ENCODE measurements at regions of chr1 and their contacts with region 1.

Region 1: DNA sequence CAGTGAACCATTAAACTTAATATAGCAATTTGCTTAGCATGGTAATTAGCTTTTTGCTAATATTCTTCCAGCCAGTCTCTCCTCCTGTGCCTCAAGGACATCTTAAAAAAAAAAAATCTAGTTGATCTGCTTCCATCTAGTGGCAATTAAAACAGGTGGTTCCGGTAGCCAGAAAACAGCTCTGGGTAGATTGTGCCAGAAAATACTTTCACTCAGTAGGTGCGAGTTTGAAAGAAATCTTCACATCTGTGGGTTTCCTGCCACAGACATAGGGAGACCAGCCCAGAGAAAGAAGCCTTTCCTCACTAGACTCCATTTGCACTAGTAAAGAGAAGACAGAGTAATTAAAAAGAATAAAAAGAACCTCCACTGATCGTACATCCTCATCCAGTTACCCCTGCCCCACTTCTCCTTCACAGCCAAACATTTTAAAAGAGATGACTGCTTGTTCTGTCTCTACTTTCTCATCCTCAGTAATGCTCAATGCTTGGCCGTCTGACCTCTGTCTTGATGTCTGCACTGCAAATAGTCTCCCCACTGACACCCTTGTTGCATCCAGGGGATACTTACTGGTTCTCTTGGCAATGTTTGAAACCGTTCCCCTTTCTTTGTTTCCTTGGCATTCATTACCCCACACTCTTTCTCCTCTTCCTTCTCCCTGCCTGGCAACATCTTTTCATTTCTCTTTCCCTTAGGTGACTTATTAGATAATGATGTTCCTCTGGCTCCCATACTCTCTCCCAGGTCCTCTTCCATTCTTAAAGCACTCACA is 16.9 kb downstream of the SELL start:
- DNase-seq: no peak
- ATAC-seq: peak; percentile 76
- H3K4me3 Mint-ChIP-seq: peak overlapping the region; percentile 56
- H3K27ac Mint-ChIP-seq: peak overlapping the region; percentile 90
- H3K4me1 Mint-ChIP-seq: peaks cover 87% of the 10 kb centered on the region
- H3K27me3 Mint-ChIP-seq: no peaks in the 10 kb centered on the region

Region 2: DNA sequence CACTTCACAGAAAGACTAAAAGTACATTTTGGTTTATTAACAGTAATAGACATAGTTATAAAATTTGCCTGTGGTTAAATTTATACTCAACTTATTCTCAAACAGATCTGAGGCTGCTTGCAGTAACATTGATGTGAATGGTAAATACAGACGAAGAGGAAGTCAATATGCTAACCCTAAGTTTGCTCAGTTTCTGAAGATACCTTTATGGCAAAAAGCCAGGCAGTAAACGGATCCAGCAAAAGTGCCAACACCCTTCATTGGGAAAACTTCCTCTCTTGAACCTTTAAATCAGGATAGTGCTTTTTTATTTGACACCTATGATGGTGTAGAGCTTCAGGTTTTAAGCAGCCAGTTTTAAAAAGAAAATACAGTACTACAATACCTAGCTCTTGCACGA is 250.6 kb before region 1 on chr1:
- POLR2A ChIA-PET with region 1: no interaction called
- DNase-seq: no peak
- ATAC-seq: no peak
- H3K4me3 Mint-ChIP-seq: no peak overlapping the region
- H3K27ac Mint-ChIP-seq: no peak overlapping the region
- H3K4me1 Mint-ChIP-seq: no peaks in the 10 kb centered on the region
- H3K27me3 Mint-ChIP-seq: peaks cover 35% of the 10 kb centered on the region

Region 3: GRCh38 chr1:169601093-169601881 is 93.2 kb before region 1 on chr1:
- POLR2A ChIA-PET with region 1: interaction called, 29 read pairs
- DNase-seq: no peak
- ATAC-seq: no peak
- H3K4me3 Mint-ChIP-seq: no peak overlapping the region
- H3K27ac Mint-ChIP-seq: peak overlapping the region; percentile 35
- H3K4me1 Mint-ChIP-seq: peaks cover 33% of the 10 kb centered on the region
- H3K27me3 Mint-ChIP-seq: no peaks in the 10 kb centered on the region

Region 4: DNA sequence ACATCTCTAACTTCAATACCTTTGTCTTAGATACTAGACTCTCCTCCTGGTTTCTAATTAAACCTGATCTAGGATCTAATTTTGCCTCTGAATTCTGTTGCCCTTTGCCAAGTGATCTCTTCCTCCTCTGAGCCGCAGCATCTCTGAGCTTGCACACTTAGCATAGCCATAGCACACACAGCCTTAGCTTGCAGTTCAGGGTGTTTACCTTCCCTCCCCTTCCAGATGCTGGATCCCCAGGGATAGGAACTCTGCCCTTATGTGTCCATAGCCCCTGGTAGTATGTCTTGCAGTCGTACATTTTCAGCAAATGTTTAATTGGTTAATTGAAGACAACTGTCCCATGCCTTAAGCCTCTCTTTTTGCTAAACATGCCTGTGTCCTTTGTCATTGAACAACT is 13.3 kb before region 1 on chr1:
- POLR2A ChIA-PET with region 1: interaction called, 10 read pairs
- DNase-seq: no peak
- ATAC-seq: peak; percentile 20
- H3K4me3 Mint-ChIP-seq: peak overlapping the region; percentile 37
- H3K27ac Mint-ChIP-seq: peak overlapping the region; percentile 73
- H3K4me1 Mint-ChIP-seq: peaks cover 28% of the 10 kb centered on the region
- H3K27me3 Mint-ChIP-seq: no peaks in the 10 kb centered on the region

Region 5: GRCh38 chr1:169707912-169708604 is 13.6 kb after region 1 on chr1:
- POLR2A ChIA-PET with region 1: interaction called, 16 read pairs
- DNase-seq: no peak
- ATAC-seq: peak; percentile 23
- H3K4me3 Mint-ChIP-seq: peak overlapping the region; percentile 88
- H3K27ac Mint-ChIP-seq: peak overlapping the region; percentile 93
- H3K4me1 Mint-ChIP-seq: peaks cover 53% of the 10 kb centered on the region
- H3K27me3 Mint-ChIP-seq: no peaks in the 10 kb centered on the region